Common myeloid progenitor, CD34-positive (primary cell): ENCODE measurements at regions of chr18 and their contacts with region 1.

Region 1: DNA sequence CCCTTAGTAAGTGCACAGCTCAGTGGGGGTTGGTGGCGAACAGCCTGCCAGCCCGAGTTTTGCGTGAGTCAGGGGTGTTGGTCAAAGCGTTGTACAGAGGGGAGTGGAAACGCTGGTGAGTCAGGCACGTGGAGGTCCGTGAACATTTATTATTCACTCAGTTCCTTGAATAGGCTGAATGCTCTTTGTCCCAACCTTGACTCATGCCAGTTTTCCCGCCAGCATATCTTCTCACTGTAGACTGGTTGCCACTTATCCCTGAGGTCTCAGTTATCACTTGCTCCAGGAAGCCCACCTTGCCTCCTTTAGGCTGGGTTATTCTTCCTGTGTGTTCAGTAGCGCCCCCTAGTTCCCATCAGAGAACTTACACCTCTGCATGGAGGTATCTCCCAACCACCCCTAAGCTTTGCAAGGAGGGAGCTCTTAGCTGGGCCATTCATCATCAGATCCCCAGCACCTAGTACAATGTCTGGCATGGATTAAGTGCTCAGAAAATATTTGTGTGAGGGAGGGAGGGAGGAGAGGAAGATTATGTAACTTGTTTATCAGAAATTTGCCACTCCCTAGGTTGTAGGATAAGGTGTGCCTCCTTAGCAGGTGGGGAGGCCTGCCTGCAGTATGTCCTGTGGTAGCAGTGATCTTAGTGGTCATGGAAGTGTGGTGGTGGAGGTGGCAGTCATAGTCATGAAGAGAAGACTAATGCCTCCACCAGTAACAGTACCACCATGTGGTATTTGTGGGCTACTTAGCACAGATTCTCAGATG is 72.1 kb downstream of the CABLES1 start:
- DNase-seq: peak; percentile 46 to 56 (median 50)
- H3K4me3 ChIP-seq: no peak overlapping the region
- H3K27ac ChIP-seq: no peak overlapping the region
- H3K4me1 ChIP-seq: peaks cover 0 to 18% (median 9%) of the 10 kb centered on the region in 4 experiments
- H3K27me3 ChIP-seq: no peaks in the 10 kb centered on the region

Region 2: GRCh38 chr18:23155537-23155936 is 51.8 kb before region 1 on chr18:
- CTCF ChIA-PET with region 1: no interaction called
- POLR2A ChIA-PET with region 1: no interaction called
- DNase-seq: no peak
- H3K4me3 ChIP-seq: no peak overlapping the region
- H3K27ac ChIP-seq: no peak overlapping the region
- H3K4me1 ChIP-seq: peaks cover 0 to 3% (median 0%) of the 10 kb centered on the region in 4 experiments
- H3K27me3 ChIP-seq: no peaks in the 10 kb centered on the region

Region 3: DNA sequence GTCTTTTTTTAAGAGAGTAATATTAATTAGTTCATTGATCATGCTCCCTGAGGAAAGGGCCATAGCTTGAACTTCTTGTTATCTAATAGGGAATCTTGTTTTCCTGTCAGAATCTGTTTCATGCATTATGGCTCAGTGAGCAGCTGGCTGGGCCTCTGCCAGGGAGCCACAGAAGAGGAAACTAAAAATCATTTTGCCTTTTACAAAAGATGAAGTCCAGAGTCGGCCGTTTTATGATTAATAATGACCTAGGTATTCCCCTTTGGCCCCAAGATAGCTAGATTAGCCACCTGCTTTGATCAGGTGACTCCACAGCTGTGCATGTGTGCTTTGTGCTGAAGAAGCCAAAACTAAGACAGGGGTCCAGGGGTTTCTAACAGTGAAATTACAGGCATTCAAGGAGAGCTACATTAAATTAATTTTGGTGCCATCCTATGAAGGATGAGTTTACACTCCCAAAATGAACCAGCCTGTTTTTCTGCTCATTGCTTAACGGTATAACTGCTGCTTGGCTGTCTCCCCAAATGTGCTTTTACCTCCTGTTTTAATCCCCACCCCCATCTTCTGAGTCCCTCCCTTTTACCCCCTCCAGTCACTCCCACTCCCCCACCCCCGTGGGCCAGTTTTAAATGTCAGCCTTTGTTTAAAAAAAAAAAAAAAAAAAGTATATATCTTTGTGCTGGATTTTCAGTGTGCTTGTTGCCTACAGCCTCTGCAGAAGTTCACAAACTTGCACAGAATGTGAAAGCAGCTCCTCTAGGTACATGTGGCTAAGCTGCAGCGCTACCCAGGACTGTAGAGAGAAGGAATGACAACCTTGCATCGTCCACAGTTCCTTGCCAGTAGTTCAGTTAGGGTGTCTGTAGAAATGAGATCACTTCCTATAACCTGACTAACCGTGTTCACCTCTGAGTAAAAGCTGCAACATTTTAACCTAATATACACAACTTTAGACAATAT is 21.0 kb after region 1 on chr18:
- CTCF ChIA-PET with region 1: interaction called, 147 read pairs
- POLR2A ChIA-PET with region 1: interaction called, 3 read pairs
- DNase-seq: peak; percentile 33 to 78 (median 63)
- H3K4me3 ChIP-seq: peak overlapping the region in 1 of 7 experiments; percentile 21
- H3K27ac ChIP-seq: peak overlapping the region; percentile 14 to 83
- H3K4me1 ChIP-seq: peaks cover 7 to 42% (median 34%) of the 10 kb centered on the region in 4 experiments
- H3K27me3 ChIP-seq: no peaks in the 10 kb centered on the region